Left cardiac atrium (tissue), 4 donors: ENCODE measurements at regions of chr17 and their contacts with region 1.

Region 1: GRCh38 chr17:38667099-38667786 is 7.5 kb downstream of the EPOP start:
- DNase-seq: peak; percentile 73
- ATAC-seq: peak; percentile 64 to 70

Region 2: GRCh38 chr17:38557836-38558727 is 109.2 kb before region 1 on chr17:
- intact Hi-C with region 1: loop called (anchors 5 to 10 kb)
- DNase-seq: peak; percentile 93
- ATAC-seq: peak; percentile 88 to 90